Activated CD8-positive, alpha-beta T cell treated with anti-CD3 and anti-CD28 coated beads for 36 hours (primary cell): ENCODE measurements at regions of chr9 and their contacts with region 1.

Region 1: GRCh38 chr9:21395778-21396717 is 10.8 kb upstream of the IFNA2 start:
- DNase-seq: peak; percentile 74
- ATAC-seq: peak; percentile 85
- H3K4me3 Mint-ChIP-seq: peak overlapping the region; percentile 64
- H3K27ac Mint-ChIP-seq: no peak overlapping the region
- H3K4me1 Mint-ChIP-seq: peaks cover 12% of the 10 kb centered on the region
- H3K27me3 Mint-ChIP-seq: peaks cover 38% of the 10 kb centered on the region
- CTCF ChIP-seq: peak; percentile 97

Region 2: DNA sequence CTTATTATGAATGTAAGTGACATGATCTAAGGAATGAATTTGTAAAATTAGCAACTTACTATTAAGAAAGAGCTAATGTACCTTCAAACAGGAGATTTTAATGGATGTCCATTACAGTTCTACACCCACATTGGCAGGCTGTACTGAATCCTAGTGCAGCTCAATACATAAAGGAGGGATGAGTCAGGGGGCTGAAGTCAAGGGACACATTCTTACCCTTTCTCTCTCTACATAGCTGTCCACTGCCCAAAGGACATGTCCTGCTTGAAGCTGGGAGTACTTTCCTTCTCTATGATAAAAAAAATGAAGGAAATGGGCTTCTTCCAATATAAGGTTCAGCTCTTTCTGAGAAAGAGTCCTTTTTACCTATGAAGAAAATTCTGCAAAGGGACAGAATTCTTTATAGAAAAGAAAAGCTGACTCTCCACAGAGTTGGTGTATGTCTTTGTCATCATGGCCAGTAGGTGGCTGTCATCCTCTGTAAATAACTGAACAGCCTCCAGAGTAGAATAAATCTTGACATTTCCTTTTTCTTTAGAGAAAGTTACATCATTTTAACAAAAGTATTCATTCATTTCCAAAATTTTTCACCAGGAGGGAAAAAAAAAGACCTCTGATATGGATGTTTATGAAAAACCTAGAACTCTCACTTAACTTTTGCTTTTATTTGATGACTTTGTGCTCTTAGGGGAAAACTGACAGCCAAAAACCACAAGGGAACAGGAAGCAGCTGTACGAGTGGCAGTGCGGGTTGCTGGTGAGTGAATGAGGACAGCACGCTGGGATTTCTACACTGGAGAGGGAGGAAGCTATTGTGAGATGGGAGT is 143.1 kb before region 1 on chr9:
- CTCF ChIA-PET with region 1: interaction called, 10 read pairs
- POLR2A ChIA-PET with region 1: no interaction called
- intact Hi-C with region 1: no loop called
- DNase-seq: peak; percentile 37
- ATAC-seq: peak; percentile 67
- H3K4me3 Mint-ChIP-seq: no peak overlapping the region
- H3K27ac Mint-ChIP-seq: no peak overlapping the region
- H3K4me1 Mint-ChIP-seq: peaks cover 5% of the 10 kb centered on the region
- H3K27me3 Mint-ChIP-seq: peaks cover 3% of the 10 kb centered on the region
- CTCF ChIP-seq: peak; percentile 56

Region 3: DNA sequence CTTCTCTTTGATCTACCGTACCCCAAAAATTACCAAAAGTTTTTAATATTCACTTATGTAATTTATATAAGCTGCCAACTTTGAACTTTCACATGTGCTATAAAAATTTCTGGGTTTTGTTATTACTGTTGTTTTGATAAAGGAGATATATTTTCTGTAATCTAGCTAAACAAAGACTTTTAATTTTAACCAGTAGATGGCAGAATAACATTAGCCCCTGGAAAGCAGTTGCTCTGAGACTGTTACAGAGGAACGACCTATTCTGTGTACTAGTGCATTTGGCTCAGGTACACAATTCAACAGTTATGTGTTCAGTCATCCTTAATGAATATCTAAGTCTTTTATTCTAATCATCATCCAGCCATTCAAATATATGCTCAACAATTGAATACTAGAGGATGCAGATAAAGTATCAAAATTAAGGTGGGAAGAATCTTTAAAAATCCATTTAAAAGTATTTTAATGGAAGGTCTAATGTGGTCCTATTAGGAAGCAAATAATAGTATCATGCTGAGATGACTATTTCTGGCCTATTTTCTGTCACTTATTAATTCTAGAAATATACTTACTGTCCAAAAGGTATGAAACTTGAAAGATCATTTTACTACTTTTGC is 69.4 kb before region 1 on chr9:
- CTCF ChIA-PET with region 1: interaction called, 150 read pairs
- POLR2A ChIA-PET with region 1: no interaction called
- intact Hi-C with region 1: loop called (anchors 5 kb)
- DNase-seq: no peak
- ATAC-seq: peak; percentile 79
- H3K4me3 Mint-ChIP-seq: no peak overlapping the region
- H3K27ac Mint-ChIP-seq: no peak overlapping the region
- H3K4me1 Mint-ChIP-seq: peaks cover 42% of the 10 kb centered on the region
- H3K27me3 Mint-ChIP-seq: no peaks in the 10 kb centered on the region
- CTCF ChIP-seq: peak; percentile 68

Region 4: DNA sequence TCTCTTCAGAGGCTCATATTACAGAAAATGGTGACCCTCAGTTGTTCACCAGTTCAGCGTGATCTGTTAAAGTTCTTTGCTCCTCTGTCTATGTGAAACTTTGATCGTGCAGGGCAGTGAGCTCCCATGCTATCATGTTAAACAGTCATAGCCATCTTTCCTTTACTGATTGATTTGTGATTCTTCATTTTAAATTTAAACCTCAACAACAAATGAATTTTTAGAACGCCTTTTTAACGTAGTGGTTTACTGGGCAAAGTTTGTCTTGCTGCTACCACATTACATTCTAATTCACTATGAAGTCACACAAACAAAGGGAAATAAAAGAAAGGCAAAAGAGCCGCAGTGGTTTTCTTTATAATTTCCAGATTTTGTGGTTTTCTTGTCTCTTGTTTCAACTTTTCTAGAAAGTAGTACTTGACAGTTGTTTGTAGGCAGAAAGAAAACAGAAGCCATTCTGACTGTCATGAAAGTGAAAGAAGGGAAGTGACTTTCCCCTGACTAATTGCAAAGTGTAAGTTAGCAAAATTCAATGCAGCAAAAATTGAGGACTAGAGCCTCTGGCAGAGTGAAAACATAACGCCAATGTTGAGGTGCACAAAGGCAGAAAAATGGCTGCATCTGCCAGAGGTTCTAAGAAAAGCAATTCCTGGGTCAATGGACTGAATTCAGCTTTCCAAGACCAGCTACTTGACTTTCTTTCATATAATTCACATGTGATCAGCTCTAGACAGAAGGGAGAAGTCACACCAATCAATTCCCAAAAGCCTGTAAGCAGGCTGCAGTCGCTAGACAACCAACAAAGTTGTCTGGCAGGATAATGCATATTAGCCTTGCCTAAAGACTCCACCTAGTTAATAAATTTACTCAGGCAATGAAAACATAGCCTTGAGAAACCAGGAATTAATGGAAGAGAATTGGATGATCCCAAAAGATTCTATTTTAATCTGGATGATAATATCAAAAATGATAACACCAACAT is 38.3 kb before region 1 on chr9:
- CTCF ChIA-PET with region 1: interaction called, 11 read pairs
- POLR2A ChIA-PET with region 1: no interaction called
- intact Hi-C with region 1: no loop called
- DNase-seq: no peak
- ATAC-seq: peak; percentile 93
- H3K4me3 Mint-ChIP-seq: peak overlapping the region; percentile 52
- H3K27ac Mint-ChIP-seq: peak overlapping the region; percentile 76
- H3K4me1 Mint-ChIP-seq: peaks cover 18% of the 10 kb centered on the region
- H3K27me3 Mint-ChIP-seq: peaks cover 8% of the 10 kb centered on the region
- CTCF ChIP-seq: no peak

Region 5: GRCh38 chr9:21408817-21409216 is 12.8 kb after region 1 on chr9 and contains the start of gene IFNA8:
- CTCF ChIA-PET with region 1: interaction called, 29 read pairs
- POLR2A ChIA-PET with region 1: interaction called, 3 read pairs
- intact Hi-C with region 1: no loop called
- DNase-seq: no peak
- ATAC-seq: no peak
- H3K4me3 Mint-ChIP-seq: no peak within 1 kb of the TSS
- H3K27ac Mint-ChIP-seq: no peak within 1 kb of the TSS
- H3K4me1 Mint-ChIP-seq: no peaks in the 10 kb centered on the region
- H3K27me3 Mint-ChIP-seq: peaks cover 13% of the 10 kb centered on the region
- CTCF ChIP-seq: no peak
- total RNA-seq, gene IFNA8: not detected